GM12878 (cell line): ENCODE measurements at regions of chr1 and their contacts with region 1.

Region 1: DNA sequence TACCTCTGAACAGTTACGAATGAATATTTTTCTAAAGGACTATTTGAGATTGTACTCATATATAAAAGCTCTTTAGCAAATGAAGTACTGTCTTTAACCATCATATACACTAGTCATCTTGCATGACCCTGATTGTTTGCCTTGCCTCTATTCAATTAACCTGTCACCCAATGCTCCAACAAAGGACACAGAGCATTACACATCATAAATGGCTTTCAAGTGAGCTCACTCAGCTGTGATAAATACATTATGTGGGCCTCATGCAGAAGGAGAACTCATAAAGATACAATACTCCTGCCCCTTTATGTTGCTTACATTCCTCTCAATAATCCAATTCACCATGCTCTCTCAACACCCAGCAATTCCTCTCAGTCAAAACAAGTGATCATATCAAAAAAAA is 993.0 kb upstream of the PRMT6 start:
- DNase-seq: no peak
- ATAC-seq: no peak
- H3K4me3 ChIP-seq: no peak overlapping the region
- H3K27ac ChIP-seq: no peak overlapping the region
- H3K4me1 ChIP-seq: no peaks in the 10 kb centered on the region
- H3K27me3 ChIP-seq: no peaks in the 10 kb centered on the region
- CTCF ChIP-seq: no peak
- EP300 ChIP-seq: no peak
- POLR2A ChIP-seq: no peak
- RAD21 ChIP-seq: no peak

Region 2: GRCh38 chr1:106121728-106122127 is 58.2 kb after region 1 on chr1:
- CTCF ChIA-PET with region 1: no interaction called
- POLR2A ChIA-PET with region 1: no interaction called
- RAD21 ChIA-PET with region 1: no interaction called
- SMC1A ChIA-PET with region 1: no interaction called
- in situ Hi-C with region 1: no loop called
- intact Hi-C with region 1: loop called (anchors 10 kb)
- DNase-seq: no peak
- ATAC-seq: no peak
- H3K4me3 ChIP-seq: no peak overlapping the region
- H3K27ac ChIP-seq: no peak overlapping the region
- H3K4me1 ChIP-seq: no peaks in the 10 kb centered on the region
- H3K27me3 ChIP-seq: no peaks in the 10 kb centered on the region
- CTCF ChIP-seq: no peak
- EP300 ChIP-seq: no peak
- POLR2A ChIP-seq: no peak
- RAD21 ChIP-seq: no peak